ENCODE measurements at regions of chr19 and their contacts with region 1.

Region 1: GRCh38 chr19:15555759-15556633 is 47.7 kb downstream of the CYP4F22 start:
- DNase-seq: peak; percentile 86 to 95 (median 91)
- ATAC-seq: peak; percentile 84 to 97 (median 95)
- H3K4me3 ChIP-seq: peak overlapping the region in 9 of 12 donors; percentile 23 to 49 (median 37)
- H3K27ac ChIP-seq: peak overlapping the region in 3 of 12 donors; percentile 12 to 31 (median 26)
- H3K4me1 ChIP-seq: peaks cover 0 to 18% (median 12%) of the 10 kb centered on the region in 12 donors
- H3K27me3 ChIP-seq: peaks cover 0 to 40% (median 9%) of the 10 kb centered on the region in 9 donors
- CTCF ChIP-seq: peak; percentile 66 to 85 (median 76)
- POLR2A ChIP-seq: no peak

Region 2: DNA sequence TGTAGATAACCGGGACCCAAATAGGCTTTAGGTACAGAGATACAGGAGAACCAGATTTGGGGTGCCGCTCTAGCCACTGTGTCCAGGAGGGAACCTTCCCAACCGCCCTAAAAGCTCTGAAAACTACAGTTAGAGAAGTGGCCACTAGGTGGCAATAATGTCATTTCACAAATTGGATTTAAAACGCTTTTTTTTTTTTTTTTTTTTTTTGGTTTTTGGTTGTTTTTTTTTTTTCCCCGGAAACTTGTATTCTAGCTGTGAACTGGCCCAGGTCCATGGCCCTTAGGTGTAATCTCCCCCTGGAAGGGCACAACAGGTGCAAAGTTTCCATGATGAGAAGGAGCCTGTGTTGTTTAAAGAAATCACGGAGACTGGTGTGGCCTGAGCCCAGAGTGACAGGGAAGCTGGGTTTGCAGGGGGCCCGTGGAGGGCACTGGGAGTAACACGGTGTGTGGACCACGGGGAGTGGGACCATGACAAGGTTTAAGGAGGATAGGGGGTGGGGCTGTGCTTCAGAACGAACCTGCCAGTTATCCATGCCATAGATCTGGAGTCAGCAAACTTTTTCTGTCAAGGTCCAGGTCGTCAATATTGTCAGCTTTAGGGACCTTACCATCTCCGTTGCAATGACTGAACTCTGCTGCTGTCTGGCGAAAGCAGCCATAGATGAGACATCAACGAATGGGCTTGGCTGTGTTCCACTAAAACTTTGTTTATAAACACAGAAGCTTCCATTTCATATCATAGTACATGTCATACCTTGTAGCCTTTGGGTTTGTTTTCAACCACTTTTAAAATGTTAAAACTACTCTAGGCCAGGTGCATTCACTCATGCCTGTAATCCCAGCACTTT is 463.9 kb before region 1 on chr19:
- intact Hi-C with region 1: loop called (anchors 2 to 5 kb)
- DNase-seq: peak in 1 of 5 donors; percentile 35
- ATAC-seq: peak in 3 of 4 donors; percentile 16 to 54 (median 47)
- H3K4me3 ChIP-seq: peak overlapping the region in 1 of 12 donors; percentile 23
- H3K27ac ChIP-seq: no peak overlapping the region
- H3K4me1 ChIP-seq: peaks cover 0 to 4% (median 0%) of the 10 kb centered on the region in 12 donors
- H3K27me3 ChIP-seq: peaks cover 0 to 12% (median 1%) of the 10 kb centered on the region in 9 donors
- CTCF ChIP-seq: peak; percentile 55 to 81 (median 73)
- POLR2A ChIP-seq: no peak

Region 3: GRCh38 chr19:15177269-15178116 is 378.5 kb before region 1 on chr19:
- intact Hi-C with region 1: loop called (anchors 1 to 5 kb)
- DNase-seq: peak; percentile 76 to 93 (median 82)
- ATAC-seq: peak; percentile 41 to 91 (median 82)
- H3K4me3 ChIP-seq: peak overlapping the region in 7 of 12 donors; percentile 20 to 47 (median 34)
- H3K27ac ChIP-seq: peak overlapping the region in 1 of 12 donors; percentile 40
- H3K4me1 ChIP-seq: peaks cover 0 to 23% (median 2%) of the 10 kb centered on the region in 12 donors
- H3K27me3 ChIP-seq: peaks cover 0 to 11% (median 4%) of the 10 kb centered on the region in 9 donors
- CTCF ChIP-seq: peak; percentile 83 to 99 (median 96)
- POLR2A ChIP-seq: no peak

Region 4: GRCh38 chr19:15418588-15419412 is 137.2 kb before region 1 on chr19 and contains the start of gene AKAP8L:
- intact Hi-C with region 1: loop called in 2 of 10 experiments (anchors 10 kb)
- DNase-seq: peak; percentile 98 to 100 (median 99)
- ATAC-seq: peak; percentile 95 to 98 (median 96)
- H3K4me3 ChIP-seq: peak within 1 kb of the TSS; percentile 75 to 100 (median 93)
- H3K27ac ChIP-seq: peak within 1 kb of the TSS; percentile 71 to 95 (median 91)
- H3K4me1 ChIP-seq: peaks cover 6 to 58% (median 39%) of the 10 kb centered on the region in 12 donors
- H3K27me3 ChIP-seq: no peaks in the 10 kb centered on the region
- CTCF ChIP-seq: peak; percentile 50 to 81 (median 63)
- POLR2A ChIP-seq: peak; percentile 53 to 91
- total RNA-seq, gene AKAP8L: 46.5 to 72.2 (median 60.1) TPM

Region 5: GRCh38 chr19:15449620-15450527 is 106.1 kb before region 1 on chr19 and contains the start of gene WIZ:
- intact Hi-C with region 1: loop called in 6 of 10 experiments (anchors 5 to 10 kb)
- DNase-seq: peak; percentile 88 to 94 (median 89)
- ATAC-seq: peak; percentile 5 to 41 (median 21)
- H3K4me3 ChIP-seq: peak within 1 kb of the TSS; percentile 65 to 95 (median 74)
- H3K27ac ChIP-seq: peak within 1 kb of the TSS; percentile 67 to 94 (median 86)
- H3K4me1 ChIP-seq: peaks cover 3 to 43% (median 20%) of the 10 kb centered on the region in 12 donors
- H3K27me3 ChIP-seq: peaks cover 0 to 9% (median 3%) of the 10 kb centered on the region in 9 donors
- CTCF ChIP-seq: no peak
- POLR2A ChIP-seq: peak in 1 of 2 donors; percentile 21
- total RNA-seq, gene WIZ: 23.1 to 52.4 (median 25.7) TPM

Region 6: DNA sequence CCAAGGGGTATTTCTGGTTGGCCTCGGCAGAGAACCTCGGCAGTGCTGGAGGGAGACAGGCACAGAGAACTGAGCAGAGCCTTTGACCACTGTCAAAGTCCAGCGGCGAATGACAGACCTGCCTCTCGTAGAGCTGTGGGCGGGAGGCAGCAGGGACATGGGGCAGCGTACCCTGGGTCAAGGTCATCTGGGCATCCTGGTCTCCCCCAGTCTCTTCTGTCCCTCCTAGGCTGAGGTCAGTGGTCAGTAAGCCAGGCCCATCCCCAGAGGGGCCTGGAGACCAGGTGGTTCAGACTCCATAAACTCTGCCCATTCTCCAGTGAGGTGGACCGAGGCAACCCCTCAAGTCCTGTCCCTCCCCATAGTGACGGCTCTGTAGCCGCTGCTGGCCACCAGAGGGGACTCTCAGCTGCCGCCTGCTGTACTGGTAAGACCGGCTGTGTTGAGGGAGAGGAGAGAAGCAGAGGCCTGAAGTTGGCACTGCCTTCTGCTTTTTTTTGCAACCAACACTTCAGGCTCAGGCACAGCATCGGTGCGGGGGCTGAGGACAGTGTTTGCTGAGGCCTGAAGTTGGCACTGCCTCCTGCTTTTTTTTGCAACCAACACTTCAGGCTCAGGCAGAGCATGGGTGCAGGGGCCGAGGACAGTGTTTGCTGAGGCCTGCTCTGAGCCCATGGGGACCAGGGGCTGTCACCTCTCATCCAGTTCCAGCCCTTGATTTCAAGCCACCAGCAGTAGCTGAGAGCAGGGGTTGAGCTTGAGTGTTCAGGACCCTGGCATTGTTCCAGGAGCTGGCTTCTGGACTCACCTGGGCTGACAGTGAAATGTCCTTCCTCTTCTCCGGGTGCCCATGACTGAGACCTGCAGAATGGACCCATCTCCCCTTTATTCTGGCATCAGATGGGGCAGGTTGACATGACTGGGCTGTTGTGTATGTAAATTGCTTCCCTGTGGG is 76.3 kb before region 1 on chr19 and contains the start of gene PGLYRP2:
- intact Hi-C with region 1: loop called in 2 of 10 experiments (anchors 5 to 10 kb)
- DNase-seq: peak in 1 of 5 donors; percentile 17
- ATAC-seq: peak in 3 of 4 donors; percentile 65 to 81 (median 78)
- H3K4me3 ChIP-seq: no peak within 1 kb of the TSS
- H3K27ac ChIP-seq: no peak within 1 kb of the TSS
- H3K4me1 ChIP-seq: no peaks in the 10 kb centered on the region
- H3K27me3 ChIP-seq: no peaks in the 10 kb centered on the region
- CTCF ChIP-seq: peak in 8 of 12 donors; percentile 12 to 35 (median 26)
- POLR2A ChIP-seq: no peak
- total RNA-seq, gene PGLYRP2: not detected

Region 7: GRCh38 chr19:15508035-15508710 is 47.8 kb before region 1 on chr19 and contains the start of gene CYP4F22:
- intact Hi-C with region 1: no loop called
- DNase-seq: no peak
- ATAC-seq: no peak
- H3K4me3 ChIP-seq: peak within 1 kb of the TSS in 6 of 12 donors; percentile 12 to 40 (median 20)
- H3K27ac ChIP-seq: no peak within 1 kb of the TSS
- H3K4me1 ChIP-seq: peaks cover 0 to 8% (median 0%) of the 10 kb centered on the region in 12 donors
- H3K27me3 ChIP-seq: peaks cover 8 to 63% (median 38%) of the 10 kb centered on the region in 9 donors
- CTCF ChIP-seq: no peak
- POLR2A ChIP-seq: no peak
- total RNA-seq, gene CYP4F22: 0.29 TPM in 1 of 9 donors, not detected in the others